Natural killer cell (primary cell): ENCODE measurements at regions of chr19 and their contacts with region 1.

Region 1: DNA sequence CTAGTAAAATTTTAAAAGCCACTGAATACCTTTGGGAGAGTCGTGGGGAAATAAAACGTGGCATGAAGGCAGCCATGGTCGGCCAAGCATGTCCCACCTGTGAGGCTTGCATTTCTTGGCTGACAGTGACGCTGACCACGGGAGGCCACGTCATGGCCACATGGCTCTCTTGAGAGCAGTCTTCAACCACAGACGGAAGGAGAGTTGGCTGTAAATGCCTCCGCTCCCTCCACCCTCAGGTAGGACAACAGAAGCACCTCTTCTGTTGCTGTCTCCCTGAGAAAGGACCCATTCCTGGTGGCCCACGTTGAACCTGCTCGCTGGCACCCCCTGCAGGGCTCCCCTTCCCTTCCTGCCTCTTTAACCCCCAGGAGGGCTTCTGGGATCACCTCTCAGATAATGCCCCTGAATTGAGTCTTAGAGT is 10.6 kb upstream of the LRRC25 start:
- DNase-seq: peak in 1 of 2 donors; percentile 44
- ATAC-seq: peak; percentile 23 to 31 (median 23)
- H3K4me3 ChIP-seq: no peak overlapping the region
- H3K4me3 Mint-ChIP-seq: no peak overlapping the region
- H3K27ac ChIP-seq: no peak overlapping the region
- H3K27ac Mint-ChIP-seq: no peak overlapping the region
- H3K4me1 ChIP-seq: peaks cover 13% of the 10 kb centered on the region
- H3K4me1 Mint-ChIP-seq: peaks cover 0 to 8% of the 10 kb centered on the region in 2 donors
- H3K27me3 ChIP-seq: no peaks in the 10 kb centered on the region
- H3K27me3 Mint-ChIP-seq: no peaks in the 10 kb centered on the region
- CTCF ChIP-seq: peak; percentile 10

Region 2: DNA sequence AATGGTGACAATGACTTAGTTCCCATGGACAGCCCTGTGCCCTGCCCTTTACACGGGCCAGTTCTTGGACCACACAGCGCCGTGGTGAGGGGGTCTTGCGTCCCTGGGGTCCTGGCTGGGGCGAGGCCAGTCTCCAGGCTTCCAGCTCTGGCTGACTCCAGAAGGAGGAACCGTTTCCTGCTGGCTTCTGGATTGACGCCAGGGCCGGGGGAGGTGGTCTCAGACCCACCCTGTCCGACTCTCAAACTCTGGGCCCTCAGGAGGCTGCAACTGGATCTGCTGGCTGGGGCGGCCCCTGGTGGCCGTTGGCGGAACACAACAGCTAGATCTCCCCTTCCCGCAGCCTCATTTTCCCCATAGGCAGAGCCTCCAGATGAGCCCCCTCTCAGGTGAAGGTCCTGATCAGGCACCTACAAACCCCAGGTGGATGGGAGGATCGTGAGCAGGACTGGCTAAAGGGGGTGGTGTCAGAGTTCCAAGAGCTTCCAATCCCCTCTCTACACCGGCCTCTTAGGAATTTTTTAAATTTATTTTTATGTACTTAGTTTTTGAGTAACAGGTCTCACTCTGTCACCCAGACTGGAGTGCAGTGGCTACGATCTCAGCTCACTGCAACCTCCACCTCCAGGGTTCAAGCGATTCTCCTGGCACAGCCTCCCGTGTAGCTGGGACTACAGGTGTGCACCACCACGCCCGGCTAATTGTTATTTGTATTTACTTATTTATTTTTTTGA is 1022.0 kb before region 1 on chr19:
- intact Hi-C with region 1: no loop called
- DNase-seq: peak; percentile 53 to 78
- ATAC-seq: peak; percentile 57 to 62 (median 59)
- H3K4me3 ChIP-seq: no peak overlapping the region
- H3K4me3 Mint-ChIP-seq: no peak overlapping the region
- H3K27ac ChIP-seq: no peak overlapping the region
- H3K27ac Mint-ChIP-seq: no peak overlapping the region
- H3K4me1 ChIP-seq: peaks cover 18% of the 10 kb centered on the region
- H3K4me1 Mint-ChIP-seq: peaks cover 0 to 6% of the 10 kb centered on the region in 2 donors
- H3K27me3 ChIP-seq: no peaks in the 10 kb centered on the region
- H3K27me3 Mint-ChIP-seq: peaks cover 0 to 3% of the 10 kb centered on the region in 2 donors
- CTCF ChIP-seq: peak; percentile 93

Region 3: GRCh38 chr19:18349524-18350128 is 58.4 kb before region 1 on chr19:
- intact Hi-C with region 1: loop called (anchors 1 kb)
- DNase-seq: peak in 1 of 2 donors; percentile 37
- ATAC-seq: peak in 2 of 3 donors; percentile 64 to 72
- H3K4me3 ChIP-seq: no peak overlapping the region
- H3K4me3 Mint-ChIP-seq: no peak overlapping the region
- H3K27ac ChIP-seq: no peak overlapping the region
- H3K27ac Mint-ChIP-seq: no peak overlapping the region
- H3K4me1 ChIP-seq: no peaks in the 10 kb centered on the region
- H3K4me1 Mint-ChIP-seq: peaks cover 14 to 22% of the 10 kb centered on the region in 2 donors
- H3K27me3 ChIP-seq: no peaks in the 10 kb centered on the region
- H3K27me3 Mint-ChIP-seq: no peaks in the 10 kb centered on the region
- CTCF ChIP-seq: peak; percentile 27

Region 4: GRCh38 chr19:18364826-18365528 is 43.1 kb before region 1 on chr19:
- intact Hi-C with region 1: no loop called
- DNase-seq: no peak
- ATAC-seq: no peak
- H3K4me3 ChIP-seq: no peak overlapping the region
- H3K4me3 Mint-ChIP-seq: no peak overlapping the region
- H3K27ac ChIP-seq: no peak overlapping the region
- H3K27ac Mint-ChIP-seq: peak overlapping the region in 1 of 2 donors; percentile 29
- H3K4me1 ChIP-seq: peaks cover 3% of the 10 kb centered on the region
- H3K4me1 Mint-ChIP-seq: peaks cover 0 to 4% of the 10 kb centered on the region in 2 donors
- H3K27me3 ChIP-seq: no peaks in the 10 kb centered on the region
- H3K27me3 Mint-ChIP-seq: no peaks in the 10 kb centered on the region
- CTCF ChIP-seq: no peak

Region 5: DNA sequence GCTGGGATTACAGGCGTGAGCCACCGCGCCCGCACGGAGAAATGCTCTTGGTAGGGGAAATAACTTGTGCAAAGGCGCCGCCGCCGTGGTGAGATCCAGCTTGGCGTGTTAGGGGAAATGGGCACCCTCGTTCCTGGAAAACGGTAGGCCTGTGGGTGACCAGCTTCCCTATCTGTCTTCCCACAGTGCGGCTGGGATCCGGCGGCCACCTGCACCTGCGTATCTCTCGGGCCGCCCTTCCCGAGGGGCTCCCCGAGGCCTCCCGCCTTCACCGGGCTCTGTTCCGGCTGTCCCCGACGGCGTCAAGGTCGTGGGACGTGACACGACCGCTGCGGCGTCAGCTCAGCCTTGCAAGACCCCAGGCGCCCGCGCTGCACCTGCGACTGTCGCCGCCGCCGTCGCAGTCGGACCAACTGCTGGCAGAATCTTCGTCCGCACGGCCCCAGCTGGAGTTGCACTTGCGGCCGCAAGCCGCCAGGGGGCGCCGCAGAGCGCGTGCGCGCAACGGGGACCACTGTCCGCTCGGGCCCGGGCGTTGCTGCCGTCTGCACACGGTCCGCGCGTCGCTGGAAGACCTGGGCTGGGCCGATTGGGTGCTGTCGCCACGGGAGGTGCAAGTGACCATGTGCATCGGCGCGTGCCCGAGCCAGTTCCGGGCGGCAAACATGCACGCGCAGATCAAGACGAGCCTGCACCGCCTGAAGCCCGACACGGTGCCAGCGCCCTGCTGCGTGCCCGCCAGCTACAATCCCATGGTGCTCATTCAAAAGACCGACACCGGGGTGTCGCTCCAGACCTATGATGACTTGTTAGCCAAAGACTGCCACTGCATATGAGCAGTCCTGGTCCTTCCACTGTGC is 19.7 kb before region 1 on chr19:
- intact Hi-C with region 1: loop called (anchors 1 kb)
- DNase-seq: peak; percentile 82 to 88
- ATAC-seq: peak; percentile 92 to 97 (median 95)
- H3K4me3 ChIP-seq: peak overlapping the region; percentile 23
- H3K4me3 Mint-ChIP-seq: peak overlapping the region; percentile 82
- H3K27ac ChIP-seq: no peak overlapping the region
- H3K27ac Mint-ChIP-seq: peak overlapping the region; percentile 53 to 83
- H3K4me1 ChIP-seq: peaks cover 42% of the 10 kb centered on the region
- H3K4me1 Mint-ChIP-seq: peaks cover 5 to 18% of the 10 kb centered on the region in 2 donors
- H3K27me3 ChIP-seq: peaks cover 13% of the 10 kb centered on the region
- H3K27me3 Mint-ChIP-seq: no peaks in the 10 kb centered on the region
- CTCF ChIP-seq: peak; percentile 100